Activated CD8-positive, alpha-beta T cell treated with anti-CD3 and anti-CD28 coated beads for 36 hours (primary cell): ENCODE measurements at regions of chr19 and their contacts with region 1.

Region 1: DNA sequence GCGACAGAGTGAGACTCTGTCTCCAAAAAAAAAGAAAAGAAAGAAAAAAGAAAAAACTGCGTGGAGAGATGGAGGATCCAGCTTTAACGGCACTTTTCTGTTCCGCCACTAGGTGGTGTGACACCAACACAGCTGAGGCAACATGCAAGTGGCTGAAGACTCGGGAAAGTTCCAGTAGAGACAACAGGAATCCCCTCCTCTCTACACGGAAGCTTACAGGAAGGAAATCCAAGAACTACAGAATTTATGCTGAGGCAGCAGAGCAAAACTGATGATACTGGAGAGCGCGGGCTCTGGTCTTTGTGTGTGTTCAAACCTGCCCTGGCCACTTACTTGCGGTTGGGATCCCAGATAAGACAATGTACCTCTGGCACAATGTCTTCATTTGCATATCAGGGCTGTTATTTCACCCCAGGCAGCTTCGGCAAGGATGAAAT is 9.9 kb downstream of the RANBP3 start:
- DNase-seq: peak; percentile 78
- ATAC-seq: peak; percentile 86
- H3K4me3 Mint-ChIP-seq: no peak overlapping the region
- H3K27ac Mint-ChIP-seq: peak overlapping the region; percentile 83
- H3K4me1 Mint-ChIP-seq: peaks cover 86% of the 10 kb centered on the region
- H3K27me3 Mint-ChIP-seq: no peaks in the 10 kb centered on the region
- CTCF ChIP-seq: peak; percentile 94

Region 2: GRCh38 chr19:5953680-5954213 is 14.3 kb before region 1 on chr19:
- CTCF ChIA-PET with region 1: interaction called, 108 read pairs
- POLR2A ChIA-PET with region 1: interaction called, 8 read pairs
- intact Hi-C with region 1: no loop called
- DNase-seq: peak; percentile 64
- ATAC-seq: peak; percentile 23
- H3K4me3 Mint-ChIP-seq: peak overlapping the region; percentile 41
- H3K27ac Mint-ChIP-seq: peak overlapping the region; percentile 96
- H3K4me1 Mint-ChIP-seq: peaks cover 91% of the 10 kb centered on the region
- H3K27me3 Mint-ChIP-seq: no peaks in the 10 kb centered on the region
- CTCF ChIP-seq: no peak

Region 3: DNA sequence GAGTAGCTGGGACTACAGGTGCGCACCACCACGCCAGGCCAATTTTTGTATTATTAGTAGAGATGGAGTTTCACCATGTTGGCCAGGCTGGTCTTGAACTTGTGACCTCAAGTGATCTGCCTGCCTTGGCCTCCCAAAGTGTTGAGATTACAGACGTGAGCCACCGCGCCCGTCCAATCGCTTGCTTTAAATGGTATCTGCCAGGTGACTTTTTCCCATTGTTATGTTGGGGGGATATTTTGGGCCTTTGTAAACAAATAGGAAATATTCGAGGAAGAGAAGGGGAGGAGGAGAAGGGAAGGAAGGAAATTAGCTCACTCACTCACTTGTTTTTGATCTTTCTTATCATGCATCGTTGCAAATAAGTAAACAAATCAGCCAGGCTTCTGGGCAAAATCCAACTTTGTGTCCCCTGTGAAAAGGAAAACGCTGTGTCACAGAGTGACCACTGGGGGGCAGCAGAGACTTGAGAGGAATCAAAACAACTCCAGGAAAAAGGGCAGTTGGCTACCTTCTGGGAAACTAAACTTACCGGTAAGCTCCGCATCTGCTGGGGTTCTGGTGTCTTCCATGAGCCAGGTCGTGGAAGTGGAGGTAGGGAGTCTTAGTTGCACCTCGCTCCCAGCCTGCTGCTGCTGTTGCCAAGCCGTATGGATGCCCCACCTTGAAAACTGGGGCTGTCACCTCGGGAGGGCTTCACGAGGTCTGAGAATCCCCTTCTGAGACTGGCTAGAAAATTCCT is 19.2 kb after region 1 on chr19:
- CTCF ChIA-PET with region 1: interaction called, 76 read pairs
- POLR2A ChIA-PET with region 1: interaction called, 4 read pairs
- intact Hi-C with region 1: no loop called
- DNase-seq: peak; percentile 80
- ATAC-seq: peak; percentile 57
- H3K4me3 Mint-ChIP-seq: peak overlapping the region; percentile 54
- H3K27ac Mint-ChIP-seq: peak overlapping the region; percentile 67
- H3K4me1 Mint-ChIP-seq: peaks cover 35% of the 10 kb centered on the region
- H3K27me3 Mint-ChIP-seq: peaks cover 3% of the 10 kb centered on the region
- CTCF ChIP-seq: peak; percentile 95

Region 4: GRCh38 chr19:6010107-6010506 is 42.1 kb after region 1 on chr19:
- CTCF ChIA-PET with region 1: no interaction called
- POLR2A ChIA-PET with region 1: no interaction called
- intact Hi-C with region 1: no loop called
- DNase-seq: no peak
- ATAC-seq: no peak
- H3K4me3 Mint-ChIP-seq: no peak overlapping the region
- H3K27ac Mint-ChIP-seq: no peak overlapping the region
- H3K4me1 Mint-ChIP-seq: no peaks in the 10 kb centered on the region
- H3K27me3 Mint-ChIP-seq: no peaks in the 10 kb centered on the region
- CTCF ChIP-seq: no peak

Region 5: GRCh38 chr19:6030214-6030507 is 62.1 kb after region 1 on chr19:
- CTCF ChIA-PET with region 1: interaction called, 12 read pairs
- POLR2A ChIA-PET with region 1: no interaction called
- intact Hi-C with region 1: no loop called
- DNase-seq: no peak
- ATAC-seq: no peak
- H3K4me3 Mint-ChIP-seq: no peak overlapping the region
- H3K27ac Mint-ChIP-seq: no peak overlapping the region
- H3K4me1 Mint-ChIP-seq: peaks cover 4% of the 10 kb centered on the region
- H3K27me3 Mint-ChIP-seq: no peaks in the 10 kb centered on the region
- CTCF ChIP-seq: no peak